Activated B cell treated with CpG ODN at 0.5 μM for 24 hours (primary cell): ENCODE measurements at regions of chr4 and their contacts with region 1.

Region 1: GRCh38 chr4:150242820-150243458 is 164.7 kb downstream of the DCLK2 start:
- DNase-seq: no peak
- ATAC-seq: no peak
- H3K4me3 Mint-ChIP-seq: no peak overlapping the region
- H3K27ac Mint-ChIP-seq: no peak overlapping the region
- H3K4me1 Mint-ChIP-seq: no peaks in the 10 kb centered on the region
- H3K27me3 Mint-ChIP-seq: peaks cover 3% of the 10 kb centered on the region
- CTCF ChIP-seq: peak; percentile 48

Region 2: GRCh38 chr4:149441338-149441737 is 801.6 kb before region 1 on chr4:
- CTCF ChIA-PET with region 1: no interaction called
- POLR2A ChIA-PET with region 1: no interaction called
- intact Hi-C with region 1: no loop called
- DNase-seq: no peak
- ATAC-seq: no peak
- H3K4me3 Mint-ChIP-seq: no peak overlapping the region
- H3K27ac Mint-ChIP-seq: no peak overlapping the region
- H3K4me1 Mint-ChIP-seq: no peaks in the 10 kb centered on the region
- H3K27me3 Mint-ChIP-seq: no peaks in the 10 kb centered on the region
- CTCF ChIP-seq: no peak

Region 3: GRCh38 chr4:149980941-149981340 is 262.0 kb before region 1 on chr4:
- CTCF ChIA-PET with region 1: interaction called, 9 read pairs
- POLR2A ChIA-PET with region 1: no interaction called
- intact Hi-C with region 1: loop called (anchors 1 kb)
- DNase-seq: no peak
- ATAC-seq: peak; percentile 60
- H3K4me3 Mint-ChIP-seq: no peak overlapping the region
- H3K27ac Mint-ChIP-seq: no peak overlapping the region
- H3K4me1 Mint-ChIP-seq: no peaks in the 10 kb centered on the region
- H3K27me3 Mint-ChIP-seq: no peaks in the 10 kb centered on the region
- CTCF ChIP-seq: peak; percentile 80

Region 4: GRCh38 chr4:149999485-150000074 is 243.4 kb before region 1 on chr4:
- CTCF ChIA-PET with region 1: interaction called, 12 read pairs
- POLR2A ChIA-PET with region 1: no interaction called
- intact Hi-C with region 1: loop called (anchors 1 kb)
- DNase-seq: no peak
- ATAC-seq: peak; percentile 54
- H3K4me3 Mint-ChIP-seq: no peak overlapping the region
- H3K27ac Mint-ChIP-seq: no peak overlapping the region
- H3K4me1 Mint-ChIP-seq: no peaks in the 10 kb centered on the region
- H3K27me3 Mint-ChIP-seq: no peaks in the 10 kb centered on the region
- CTCF ChIP-seq: no peak

Region 5: DNA sequence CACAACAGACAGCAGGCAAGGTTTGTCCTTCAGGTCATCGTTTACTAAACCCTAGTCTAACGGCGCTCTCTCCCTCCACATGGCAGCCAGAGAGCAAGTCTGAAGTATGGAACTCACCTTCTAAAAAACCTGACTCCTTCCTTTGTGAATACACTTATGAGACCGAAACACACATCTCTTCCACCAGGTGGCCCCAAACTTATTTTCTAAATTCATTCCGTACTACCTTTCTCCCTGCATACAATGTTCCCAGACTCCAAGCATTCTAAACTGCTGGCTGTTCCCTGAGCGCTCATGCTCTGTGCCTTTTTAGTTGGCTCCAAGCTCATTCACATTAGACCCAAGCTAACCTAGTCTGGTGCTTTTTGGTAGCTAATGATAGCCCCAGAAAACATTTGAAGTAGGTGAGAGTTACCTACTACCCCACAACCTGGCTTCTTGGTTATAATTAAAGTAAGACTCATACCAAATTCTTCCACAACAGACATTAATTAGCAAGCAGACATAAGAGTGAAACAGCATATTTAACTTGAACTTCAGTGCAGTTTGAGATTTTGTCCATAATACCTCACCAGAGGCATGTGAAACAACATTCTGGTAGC is 232.3 kb before region 1 on chr4:
- CTCF ChIA-PET with region 1: interaction called, 30 read pairs
- POLR2A ChIA-PET with region 1: no interaction called
- intact Hi-C with region 1: loop called (anchors 1 kb)
- DNase-seq: no peak
- ATAC-seq: peak; percentile 37
- H3K4me3 Mint-ChIP-seq: no peak overlapping the region
- H3K27ac Mint-ChIP-seq: no peak overlapping the region
- H3K4me1 Mint-ChIP-seq: no peaks in the 10 kb centered on the region
- H3K27me3 Mint-ChIP-seq: peaks cover 5% of the 10 kb centered on the region
- CTCF ChIP-seq: no peak

Region 6: GRCh38 chr4:150305995-150306394 is 63.1 kb after region 1 on chr4:
- CTCF ChIA-PET with region 1: no interaction called
- POLR2A ChIA-PET with region 1: no interaction called
- intact Hi-C with region 1: no loop called
- DNase-seq: no peak
- ATAC-seq: no peak
- H3K4me3 Mint-ChIP-seq: no peak overlapping the region
- H3K27ac Mint-ChIP-seq: no peak overlapping the region
- H3K4me1 Mint-ChIP-seq: no peaks in the 10 kb centered on the region
- H3K27me3 Mint-ChIP-seq: no peaks in the 10 kb centered on the region
- CTCF ChIP-seq: no peak

Region 7: GRCh38 chr4:150593996-150594395 is 351.1 kb after region 1 on chr4:
- CTCF ChIA-PET with region 1: no interaction called
- POLR2A ChIA-PET with region 1: no interaction called
- intact Hi-C with region 1: no loop called
- DNase-seq: no peak
- ATAC-seq: no peak
- H3K4me3 Mint-ChIP-seq: no peak overlapping the region
- H3K27ac Mint-ChIP-seq: no peak overlapping the region
- H3K4me1 Mint-ChIP-seq: no peaks in the 10 kb centered on the region
- H3K27me3 Mint-ChIP-seq: no peaks in the 10 kb centered on the region
- CTCF ChIP-seq: no peak